Cardiac septum (tissue), 1 donor: ENCODE measurements at regions of chr20 and their contacts with region 1.

Region 1: GRCh38 chr20:10192171-10192570 is 26.5 kb upstream of the SNAP25 start:
- DNase-seq: no peak

Region 2: DNA sequence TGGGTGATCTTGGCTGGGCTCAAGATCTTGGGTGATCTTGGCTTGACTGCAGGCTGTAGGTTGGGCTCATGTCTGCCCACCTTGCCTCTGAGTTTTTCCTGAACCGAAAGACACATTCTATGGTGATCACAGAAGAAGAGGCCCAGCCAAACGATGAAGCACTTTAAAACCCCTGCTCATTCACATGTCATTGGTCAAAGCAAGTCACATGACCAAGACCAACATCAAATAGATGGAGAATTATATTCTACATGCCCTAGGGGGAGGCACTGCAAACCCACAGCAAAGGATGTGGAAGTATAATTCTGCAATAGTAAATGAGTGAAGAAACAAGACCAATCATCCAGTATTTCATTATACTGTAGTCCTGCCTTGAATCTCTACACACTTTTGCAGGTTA is 49.5 kb before region 1 on chr20:
- intact Hi-C with region 1: loop called (anchors 5 kb)
- DNase-seq: no peak